Activated CD4-positive, alpha-beta T cell treated with anti-CD3 and anti-CD28 coated beads, Interleukin-2, amount 10 ng/mL, durations not matched to agents 7 days and 5 days (primary cell): ENCODE measurements at regions of chr19 and their contacts with region 1.

Region 1: DNA sequence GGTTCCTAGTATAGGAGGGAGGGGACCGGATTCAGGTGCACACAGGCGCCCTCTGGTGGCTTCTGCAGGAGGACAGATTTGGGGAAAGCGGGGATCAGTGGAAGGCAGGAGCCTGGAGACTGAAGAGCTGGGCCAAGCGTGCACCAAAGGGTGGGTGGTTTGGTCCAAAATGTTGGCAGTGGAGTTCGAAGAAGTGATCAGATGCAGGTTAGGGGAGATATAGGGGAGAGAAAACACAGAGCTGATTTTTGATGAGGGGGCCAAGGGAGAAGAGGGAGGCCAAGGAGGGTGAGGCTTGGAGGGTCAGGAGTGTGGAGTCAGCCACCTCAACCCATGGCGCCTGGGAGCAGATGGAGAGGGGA is 6.8 kb upstream of the CARM1 start:
- DNase-seq: peak; percentile 87
- H3K4me3 Mint-ChIP-seq: no peak overlapping the region
- H3K27ac Mint-ChIP-seq: peak overlapping the region; percentile 72
- H3K4me1 Mint-ChIP-seq: peaks cover 35% of the 10 kb centered on the region
- H3K27me3 Mint-ChIP-seq: no peaks in the 10 kb centered on the region

Region 2: DNA sequence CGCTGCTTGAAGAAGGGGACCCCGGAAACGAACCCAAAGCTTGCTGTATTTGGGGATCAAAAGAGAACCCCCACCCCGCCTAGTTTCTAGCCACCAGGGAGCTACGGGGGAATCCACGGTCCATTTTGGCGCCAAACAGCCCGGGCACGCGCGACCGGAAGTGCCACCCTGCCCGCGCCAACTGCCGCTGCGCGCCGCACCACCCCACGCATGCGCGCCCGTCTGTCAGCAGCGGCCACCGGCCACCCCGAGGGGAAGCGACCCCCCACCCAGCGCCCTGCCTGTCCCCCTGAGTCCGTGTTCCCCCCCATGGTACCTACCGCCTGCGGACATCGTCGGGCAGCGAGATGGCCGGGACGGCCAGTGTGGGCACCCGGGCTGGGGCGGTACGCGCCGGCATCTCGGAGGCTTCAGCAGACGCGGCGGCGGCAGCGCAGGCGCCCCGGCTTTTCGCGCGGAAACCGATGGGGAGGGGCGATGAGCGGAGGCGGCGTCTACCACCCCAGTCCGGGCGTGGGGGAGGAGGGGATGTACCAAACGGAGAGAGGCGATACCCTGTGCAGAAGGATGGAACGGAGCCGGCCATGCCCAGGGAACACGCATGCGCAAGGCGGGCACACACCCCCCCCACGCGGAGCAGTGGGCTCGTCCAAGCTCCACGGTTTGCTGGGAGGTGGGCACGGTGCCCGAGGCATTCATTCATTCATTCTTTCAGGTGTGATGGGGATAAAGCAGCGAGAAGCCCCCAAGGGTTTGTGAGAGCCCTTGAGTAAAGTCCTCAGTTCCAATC is 669.8 kb before region 1 on chr19 and contains the start of gene DNMT1:
- CTCF ChIA-PET with region 1: no interaction called
- POLR2A ChIA-PET with region 1: no interaction called
- DNase-seq: peak; percentile 98
- H3K4me3 Mint-ChIP-seq: peak within 1 kb of the TSS; percentile 84
- H3K27ac Mint-ChIP-seq: peak within 1 kb of the TSS; percentile 90
- H3K4me1 Mint-ChIP-seq: peaks cover 50% of the 10 kb centered on the region
- H3K27me3 Mint-ChIP-seq: no peaks in the 10 kb centered on the region
- total RNA-seq, gene DNMT1: 375 to 404 TPM

Region 3: GRCh38 chr19:10695401-10696398 is 168.8 kb before region 1 on chr19:
- CTCF ChIA-PET with region 1: interaction called, 14 read pairs
- POLR2A ChIA-PET with region 1: interaction called, 5 read pairs
- DNase-seq: peak; percentile 94
- H3K4me3 Mint-ChIP-seq: peak overlapping the region; percentile 72
- H3K27ac Mint-ChIP-seq: no peak overlapping the region
- H3K4me1 Mint-ChIP-seq: peaks cover 17% of the 10 kb centered on the region
- H3K27me3 Mint-ChIP-seq: peaks cover 15% of the 10 kb centered on the region

Region 4: GRCh38 chr19:10835754-10836477 is 28.6 kb before region 1 on chr19 and contains the start of gene TMED1:
- CTCF ChIA-PET with region 1: interaction called, 36 read pairs
- POLR2A ChIA-PET with region 1: no interaction called
- DNase-seq: peak; percentile 98
- H3K4me3 Mint-ChIP-seq: peak within 1 kb of the TSS; percentile 92
- H3K27ac Mint-ChIP-seq: peak within 1 kb of the TSS; percentile 99
- H3K4me1 Mint-ChIP-seq: peaks cover 22% of the 10 kb centered on the region
- H3K27me3 Mint-ChIP-seq: peaks cover 4% of the 10 kb centered on the region
- total RNA-seq, gene TMED1: 8.6 to 11.2 TPM

Region 5: DNA sequence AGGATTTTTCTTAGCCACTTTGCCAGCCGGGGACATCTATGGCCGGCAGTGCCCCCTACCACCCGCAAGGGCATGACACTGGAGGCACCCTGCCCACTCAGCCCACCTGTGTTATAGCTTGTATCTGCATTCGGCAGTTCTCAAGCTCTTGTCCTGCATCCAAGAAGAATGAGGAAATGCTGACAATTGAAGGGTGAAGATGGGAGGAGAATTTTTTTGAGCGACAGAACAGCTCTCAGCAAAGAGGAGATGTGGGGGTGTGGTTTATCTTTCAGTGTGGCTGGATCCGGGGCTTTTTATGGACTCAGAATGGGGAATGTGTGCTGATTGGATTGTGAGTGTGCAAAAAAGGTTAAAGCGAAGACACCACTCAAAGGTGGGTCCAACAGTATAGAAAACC is 21.7 kb before region 1 on chr19:
- CTCF ChIA-PET with region 1: interaction called, 36 read pairs
- POLR2A ChIA-PET with region 1: no interaction called
- DNase-seq: no peak
- H3K4me3 Mint-ChIP-seq: no peak overlapping the region
- H3K27ac Mint-ChIP-seq: no peak overlapping the region
- H3K4me1 Mint-ChIP-seq: peaks cover 2% of the 10 kb centered on the region
- H3K27me3 Mint-ChIP-seq: peaks cover 4% of the 10 kb centered on the region